ENCODE measurements at regions of chr11 and their contacts with region 1.

Region 1: DNA sequence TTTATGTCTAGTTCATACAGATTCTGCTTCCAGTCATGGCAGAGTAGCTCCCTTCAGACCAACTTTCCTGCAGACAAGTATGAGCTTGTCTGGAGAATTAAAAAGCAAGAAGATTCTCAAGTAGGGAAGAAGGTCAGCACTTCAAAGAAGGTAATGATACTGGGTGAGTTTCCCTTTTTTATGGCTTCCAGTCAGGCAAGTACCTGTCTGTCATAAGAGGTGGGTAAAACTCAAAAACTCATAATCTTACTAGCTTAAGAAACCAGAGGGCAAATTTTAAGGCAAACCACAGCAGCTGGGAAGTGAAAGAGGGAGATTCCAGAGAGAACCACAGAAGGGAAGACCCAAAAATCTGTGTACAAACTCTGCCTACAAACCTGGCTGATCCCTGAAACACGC is 54.2 kb downstream of the DENND5A start:
- DNase-seq: no peak
- H3K4me3 Mint-ChIP-seq: peak overlapping the region; percentile 41
- H3K27ac Mint-ChIP-seq: peak overlapping the region; percentile 21
- H3K4me1 Mint-ChIP-seq: peaks cover 63% of the 10 kb centered on the region
- H3K27me3 Mint-ChIP-seq: peaks cover 2% of the 10 kb centered on the region

Region 2: GRCh38 chr11:9003573-9004309 is 207.2 kb before region 1 on chr11 and contains the start of gene NRIP3:
- intact Hi-C with region 1: no loop called
- DNase-seq: peak; percentile 73
- H3K4me3 Mint-ChIP-seq: peak within 1 kb of the TSS; percentile 83
- H3K27ac Mint-ChIP-seq: peak within 1 kb of the TSS; percentile 76
- H3K4me1 Mint-ChIP-seq: peaks cover 31% of the 10 kb centered on the region
- H3K27me3 Mint-ChIP-seq: peaks cover 36% of the 10 kb centered on the region
- total RNA-seq, gene NRIP3: 4.4 and 4.8 TPM in 2 replicates

Region 3: GRCh38 chr11:9060700-9061111 is 150.2 kb before region 1 on chr11:
- intact Hi-C with region 1: loop called (anchors 2 kb)
- DNase-seq: peak; percentile 48
- H3K4me3 Mint-ChIP-seq: no peak overlapping the region
- H3K27ac Mint-ChIP-seq: peak overlapping the region; percentile 40
- H3K4me1 Mint-ChIP-seq: peaks cover 12% of the 10 kb centered on the region
- H3K27me3 Mint-ChIP-seq: peaks cover 16% of the 10 kb centered on the region

Region 4: DNA sequence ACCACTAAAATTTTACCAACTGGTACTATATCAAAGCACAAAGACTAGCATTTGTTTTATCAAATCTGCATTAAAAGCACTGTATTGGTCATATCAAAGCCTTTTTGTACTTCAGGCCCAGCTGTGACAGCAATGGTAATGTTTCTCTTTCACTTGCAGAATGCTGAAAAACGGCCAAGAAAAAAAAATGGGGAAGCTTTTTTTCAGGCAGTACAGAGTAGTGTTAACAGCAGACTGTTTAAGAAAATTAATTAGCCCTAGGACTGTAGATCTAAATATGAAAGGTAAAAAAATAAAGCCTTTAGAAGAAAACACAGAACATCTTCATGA is 20.9 kb after region 1 on chr11:
- intact Hi-C with region 1: loop called (anchors 2 kb)
- DNase-seq: no peak
- H3K4me3 Mint-ChIP-seq: peak overlapping the region; percentile 49
- H3K27ac Mint-ChIP-seq: peak overlapping the region; percentile 27
- H3K4me1 Mint-ChIP-seq: peaks cover 34% of the 10 kb centered on the region
- H3K27me3 Mint-ChIP-seq: no peaks in the 10 kb centered on the region

Region 5: GRCh38 chr11:9280655-9281301 is 69.9 kb after region 1 on chr11:
- intact Hi-C with region 1: loop called (anchors 2 kb)
- DNase-seq: peak; percentile 64
- H3K4me3 Mint-ChIP-seq: peak overlapping the region; percentile 60
- H3K27ac Mint-ChIP-seq: peak overlapping the region; percentile 57
- H3K4me1 Mint-ChIP-seq: peaks cover 15% of the 10 kb centered on the region
- H3K27me3 Mint-ChIP-seq: peaks cover 6% of the 10 kb centered on the region

Region 6: GRCh38 chr11:9363954-9364912 is 153.3 kb after region 1 on chr11:
- intact Hi-C with region 1: loop called (anchors 1 kb)
- DNase-seq: peak; percentile 76
- H3K4me3 Mint-ChIP-seq: peak overlapping the region; percentile 82
- H3K27ac Mint-ChIP-seq: peak overlapping the region; percentile 90
- H3K4me1 Mint-ChIP-seq: peaks cover 28% of the 10 kb centered on the region
- H3K27me3 Mint-ChIP-seq: peaks cover 5% of the 10 kb centered on the region

Region 7: DNA sequence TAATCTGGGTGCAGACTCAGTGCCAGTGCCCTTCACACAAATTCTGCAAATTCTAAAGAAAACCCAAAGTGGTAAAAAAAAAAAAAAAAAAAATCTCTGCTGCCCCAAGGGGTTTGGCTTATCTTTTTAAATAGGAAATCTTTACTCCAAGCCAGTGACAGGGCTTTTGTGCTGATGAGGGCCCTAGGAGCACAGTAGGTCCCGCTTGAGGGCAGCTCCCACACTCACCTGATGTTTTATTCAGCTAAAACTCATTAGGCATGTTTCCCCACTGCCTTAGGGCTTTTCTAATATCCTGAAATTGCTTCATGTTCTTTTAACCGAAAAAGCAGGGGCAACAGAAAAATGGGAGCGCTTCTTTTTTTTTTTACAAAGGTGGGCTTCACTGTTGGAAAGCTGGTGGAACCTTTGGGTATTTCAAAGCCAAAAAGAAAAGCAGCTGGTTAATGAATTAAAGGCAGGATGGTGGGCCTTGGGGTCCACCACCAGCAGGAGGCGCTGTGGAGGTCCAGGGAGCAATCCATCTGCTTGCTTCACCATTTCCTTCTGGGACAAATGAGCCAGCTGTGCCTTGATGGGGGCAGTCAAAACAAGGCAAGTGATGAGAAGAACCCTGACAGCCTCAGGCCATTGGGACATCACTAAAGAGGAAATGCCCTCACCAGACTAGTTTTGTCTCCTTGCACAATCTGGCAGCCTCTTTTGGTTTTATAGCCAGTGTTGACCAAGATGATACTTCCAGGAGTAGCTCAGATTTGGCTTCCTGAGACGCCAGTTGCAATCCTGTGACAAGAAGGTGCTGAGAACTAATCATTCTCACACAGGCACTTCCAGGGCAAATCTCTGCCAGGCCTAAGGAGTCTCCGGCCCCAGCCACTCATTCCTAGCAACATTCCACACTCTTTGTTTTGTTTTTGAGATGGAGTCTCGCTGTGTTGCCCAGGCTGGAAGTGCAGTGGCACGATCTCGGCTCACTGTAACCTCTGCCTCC is 324.2 kb after region 1 on chr11:
- intact Hi-C with region 1: no loop called
- DNase-seq: peak; percentile 59
- H3K4me3 Mint-ChIP-seq: no peak overlapping the region
- H3K27ac Mint-ChIP-seq: no peak overlapping the region
- H3K4me1 Mint-ChIP-seq: no peaks in the 10 kb centered on the region
- H3K27me3 Mint-ChIP-seq: no peaks in the 10 kb centered on the region

Region 8: DNA sequence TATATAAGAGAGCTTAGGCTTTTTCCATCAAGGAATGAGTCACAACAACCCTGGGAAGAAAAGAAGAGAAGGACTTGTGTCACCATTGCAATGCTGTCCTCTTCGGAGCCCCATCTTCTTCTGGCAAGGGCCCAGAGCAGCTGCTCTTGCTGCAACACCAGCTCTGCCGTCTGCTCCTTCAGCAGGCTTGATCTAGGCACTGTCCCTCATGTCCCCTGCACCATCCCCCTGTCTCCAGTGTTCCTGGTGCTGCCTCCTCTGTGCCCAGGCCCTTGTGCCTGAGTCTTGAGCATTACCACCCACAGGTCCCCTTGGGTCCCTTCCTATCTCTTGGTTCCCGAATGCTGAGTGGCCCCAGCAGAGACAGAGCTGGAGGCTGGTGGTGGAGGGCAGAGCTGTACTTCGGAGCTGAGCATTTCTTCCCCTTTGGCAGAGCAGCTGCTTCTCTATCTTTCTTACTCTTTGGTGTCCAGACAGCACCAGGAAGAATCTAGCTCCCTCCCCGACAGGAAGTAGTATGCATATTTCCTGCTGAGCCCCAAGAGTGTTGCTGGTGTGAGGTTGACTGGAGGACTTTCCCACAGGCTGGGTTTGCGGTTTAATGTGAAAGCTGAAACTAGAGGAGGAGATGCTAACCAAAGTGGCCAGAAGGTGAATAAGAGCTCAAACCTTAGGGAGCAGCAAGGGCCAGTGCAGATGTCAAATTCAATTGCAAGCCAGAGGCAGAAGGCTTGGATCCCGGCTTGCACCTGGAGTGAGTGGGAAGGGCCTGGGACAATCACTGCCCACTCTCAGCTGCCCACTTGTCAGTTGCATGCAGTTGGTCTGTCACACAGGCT is 390.3 kb after region 1 on chr11:
- intact Hi-C with region 1: loop called (anchors 2 kb)
- DNase-seq: peak; percentile 74
- H3K4me3 Mint-ChIP-seq: peak overlapping the region; percentile 71
- H3K27ac Mint-ChIP-seq: peak overlapping the region; percentile 90
- H3K4me1 Mint-ChIP-seq: peaks cover 34% of the 10 kb centered on the region
- H3K27me3 Mint-ChIP-seq: peaks cover 4% of the 10 kb centered on the region

Measured in activated T-helper 1 cell treated with anti-CD3 and anti-CD28 coated beads, Interleukin-12 subunit alpha, Interleukin-12 subunit beta, Interleukin-2, Interleukin-4 antibody, amounts not matched to agents 30 ng/mL and 10 ng/mL and 1 ng/mL, durations not matched to agents 14 hours and 24 hours and 36 hours (primary cell).